ENCODE measurements at regions of chr10 and their contacts with region 1.

Region 1: DNA sequence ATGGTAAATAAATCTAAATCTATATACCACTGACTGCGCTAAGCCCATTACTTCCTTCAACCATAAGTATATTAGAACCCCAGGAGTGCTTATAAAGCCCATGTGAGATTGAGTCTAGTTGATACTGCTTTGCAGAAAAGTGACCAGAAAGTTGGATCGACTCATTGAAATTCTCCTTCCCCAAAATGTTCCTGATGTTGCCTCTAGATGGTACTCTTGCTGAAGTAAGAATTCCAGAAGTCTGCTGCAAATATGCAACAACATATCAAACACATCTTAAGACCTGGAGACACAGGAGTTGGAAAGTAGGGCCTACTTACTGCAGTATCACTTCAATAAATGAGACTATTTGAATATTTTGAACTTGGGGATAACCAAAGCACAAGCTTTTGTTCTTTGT is 550.8 kb downstream of the IPMK start:
- DNase-seq: no peak
- ATAC-seq: no peak

Region 2: GRCh38 chr10:57849691-57850357 is 132.9 kb after region 1 on chr10:
- intact Hi-C with region 1: loop called (anchors 10 kb)
- DNase-seq: no peak
- ATAC-seq: no peak

Region 3: GRCh38 chr10:58064714-58065528 is 348.0 kb after region 1 on chr10:
- intact Hi-C with region 1: loop called (anchors 5 kb)
- DNase-seq: no peak
- ATAC-seq: no peak

Measured in Right ventricle myocardium inferior (tissue), 1 donor.